ENCODE measurements at regions of chr14 and their contacts with region 1.

Region 1: DNA sequence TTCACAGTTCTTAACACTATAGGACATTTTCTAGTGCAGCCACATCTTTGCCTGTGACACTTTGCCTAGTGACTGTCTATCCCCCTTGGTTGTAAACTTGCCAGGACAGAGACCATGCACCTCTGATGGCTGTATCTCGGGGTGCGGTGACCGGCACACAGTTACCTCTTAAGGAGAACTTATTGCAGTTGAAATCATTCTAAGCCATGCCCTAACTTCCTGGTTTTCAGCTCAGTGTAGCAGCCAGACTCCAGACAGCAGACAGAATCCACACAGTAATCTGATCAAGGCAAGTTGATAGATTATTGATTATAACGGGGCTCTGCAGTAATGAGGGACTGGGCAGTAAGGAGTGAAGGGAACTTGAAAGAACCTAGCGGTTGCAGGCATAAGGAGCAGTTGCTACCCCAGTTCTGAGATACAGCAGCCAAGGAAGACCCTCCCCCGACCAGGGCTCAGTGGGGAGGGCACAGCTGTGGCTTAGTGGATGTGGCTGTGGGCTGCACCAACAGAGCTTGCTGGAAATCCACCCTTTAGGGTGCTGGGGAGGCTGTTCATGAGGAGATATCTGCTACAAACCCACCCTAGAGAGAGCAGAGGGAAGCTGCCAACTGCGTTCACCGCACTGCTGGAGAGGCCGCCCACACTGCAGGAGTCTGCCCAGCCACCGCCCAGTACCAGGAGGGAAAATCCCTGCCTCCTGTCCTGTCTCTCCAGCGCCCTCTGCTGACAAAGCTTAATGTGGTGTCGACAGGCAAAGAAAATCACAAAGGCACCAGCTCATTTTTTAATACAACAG is 58.2 kb upstream of the BEGAIN start:
- DNase-seq: peak; percentile 77 to 85 (median 80)
- H3K4me3 ChIP-seq: peak overlapping the region in 1 of 2 donors; percentile 27
- H3K4me3 Mint-ChIP-seq: peak overlapping the region in 7 of 8 donors; percentile 10 to 74 (median 64)
- H3K27ac ChIP-seq: no peak overlapping the region
- H3K27ac Mint-ChIP-seq: peak overlapping the region; percentile 9 to 83 (median 68)
- H3K4me1 ChIP-seq: peaks cover 43% of the 10 kb centered on the region
- H3K4me1 Mint-ChIP-seq: peaks cover 34 to 55% (median 48%) of the 10 kb centered on the region in 4 donors
- H3K27me3 ChIP-seq: no peaks in the 10 kb centered on the region
- H3K27me3 Mint-ChIP-seq: no peaks in the 10 kb centered on the region

Region 2: GRCh38 chr14:100375963-100376735 is 269.2 kb before region 1 on chr14:
- CTCF ChIA-PET with region 1: interaction called, 277 read pairs
- POLR2A ChIA-PET with region 1: interaction called, 8 read pairs
- intact Hi-C with region 1: no loop called
- DNase-seq: peak; percentile 88 to 93 (median 90)
- H3K4me3 ChIP-seq: peak within 1 kb of the TSS; percentile 83 to 92
- H3K4me3 Mint-ChIP-seq: peak within 1 kb of the TSS; percentile 92 to 97 (median 94)
- H3K27ac ChIP-seq: peak within 1 kb of the TSS; percentile 79
- H3K27ac Mint-ChIP-seq: peak within 1 kb of the TSS; percentile 90 to 96 (median 94)
- H3K4me1 ChIP-seq: peaks cover 28% of the 10 kb centered on the region
- H3K4me1 Mint-ChIP-seq: peaks cover 23 to 53% (median 32%) of the 10 kb centered on the region in 4 donors
- H3K27me3 ChIP-seq: no peaks in the 10 kb centered on the region
- H3K27me3 Mint-ChIP-seq: no peaks in the 10 kb centered on the region

Region 3: DNA sequence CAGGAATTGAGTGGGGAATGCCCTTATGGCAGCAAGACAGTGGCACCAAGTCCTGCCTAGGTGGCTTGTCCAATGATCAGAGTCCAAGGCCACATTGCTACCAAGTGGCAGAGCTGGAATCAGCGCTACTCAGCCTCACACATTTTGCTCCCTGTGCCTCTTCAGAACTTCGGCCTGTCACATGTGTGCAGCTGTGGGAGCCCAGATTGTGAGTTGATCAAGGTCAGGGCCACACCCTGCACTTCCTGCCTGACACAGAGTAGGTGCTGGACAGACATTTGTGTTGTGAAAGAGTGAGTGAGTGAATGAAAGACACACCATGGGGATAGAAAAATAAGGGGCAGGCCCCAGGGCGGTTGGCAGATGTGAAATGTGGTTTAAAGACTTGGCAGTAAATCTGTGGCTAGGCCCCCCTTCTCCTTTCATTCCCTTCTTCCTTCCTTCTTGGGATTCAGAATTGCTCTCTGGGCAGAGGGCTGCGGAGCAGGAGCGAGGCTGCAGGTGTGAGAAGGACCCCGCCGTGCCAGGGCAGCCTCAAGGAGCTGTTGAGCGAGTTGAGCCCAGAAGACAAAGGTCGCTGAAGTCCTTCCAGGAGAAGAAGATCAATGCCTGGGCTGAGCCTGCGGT is 238.8 kb before region 1 on chr14:
- CTCF ChIA-PET with region 1: interaction called, 14 read pairs
- POLR2A ChIA-PET with region 1: no interaction called
- intact Hi-C with region 1: no loop called
- DNase-seq: peak in 4 of 5 donors; percentile 17 to 29 (median 25)
- H3K4me3 ChIP-seq: no peak overlapping the region
- H3K4me3 Mint-ChIP-seq: peak overlapping the region in 7 of 8 donors; percentile 39 to 80 (median 70)
- H3K27ac ChIP-seq: peak overlapping the region; percentile 6
- H3K27ac Mint-ChIP-seq: peak overlapping the region; percentile 54 to 93 (median 89)
- H3K4me1 ChIP-seq: peaks cover 35% of the 10 kb centered on the region
- H3K4me1 Mint-ChIP-seq: peaks cover 26 to 49% (median 30%) of the 10 kb centered on the region in 4 donors
- H3K27me3 ChIP-seq: no peaks in the 10 kb centered on the region
- H3K27me3 Mint-ChIP-seq: no peaks in the 10 kb centered on the region

Region 4: DNA sequence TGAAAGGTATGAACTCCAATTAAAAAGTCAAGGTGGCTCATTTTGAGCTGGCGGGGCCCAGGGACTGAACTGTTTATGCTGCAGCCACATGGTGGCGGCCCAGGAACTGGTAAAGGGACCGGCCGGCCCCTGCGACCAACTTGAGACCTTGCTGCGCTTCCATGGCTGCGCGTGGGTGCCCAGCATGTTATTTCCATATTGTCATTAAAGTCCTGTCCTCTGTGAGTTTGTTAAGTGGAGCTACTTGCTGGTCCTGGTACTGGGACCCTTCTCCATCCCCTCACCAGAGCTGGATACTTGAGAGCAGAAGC is 120.5 kb before region 1 on chr14:
- CTCF ChIA-PET with region 1: interaction called, 16 read pairs
- POLR2A ChIA-PET with region 1: interaction called, 5 read pairs
- intact Hi-C with region 1: loop called (anchors 1 kb)
- DNase-seq: peak in 2 of 5 donors; percentile 23 to 25
- H3K4me3 ChIP-seq: no peak overlapping the region
- H3K4me3 Mint-ChIP-seq: no peak overlapping the region
- H3K27ac ChIP-seq: no peak overlapping the region
- H3K27ac Mint-ChIP-seq: no peak overlapping the region
- H3K4me1 ChIP-seq: no peaks in the 10 kb centered on the region
- H3K4me1 Mint-ChIP-seq: peaks cover 0 to 1% (median 0%) of the 10 kb centered on the region in 4 donors
- H3K27me3 ChIP-seq: no peaks in the 10 kb centered on the region
- H3K27me3 Mint-ChIP-seq: no peaks in the 10 kb centered on the region

Region 5: DNA sequence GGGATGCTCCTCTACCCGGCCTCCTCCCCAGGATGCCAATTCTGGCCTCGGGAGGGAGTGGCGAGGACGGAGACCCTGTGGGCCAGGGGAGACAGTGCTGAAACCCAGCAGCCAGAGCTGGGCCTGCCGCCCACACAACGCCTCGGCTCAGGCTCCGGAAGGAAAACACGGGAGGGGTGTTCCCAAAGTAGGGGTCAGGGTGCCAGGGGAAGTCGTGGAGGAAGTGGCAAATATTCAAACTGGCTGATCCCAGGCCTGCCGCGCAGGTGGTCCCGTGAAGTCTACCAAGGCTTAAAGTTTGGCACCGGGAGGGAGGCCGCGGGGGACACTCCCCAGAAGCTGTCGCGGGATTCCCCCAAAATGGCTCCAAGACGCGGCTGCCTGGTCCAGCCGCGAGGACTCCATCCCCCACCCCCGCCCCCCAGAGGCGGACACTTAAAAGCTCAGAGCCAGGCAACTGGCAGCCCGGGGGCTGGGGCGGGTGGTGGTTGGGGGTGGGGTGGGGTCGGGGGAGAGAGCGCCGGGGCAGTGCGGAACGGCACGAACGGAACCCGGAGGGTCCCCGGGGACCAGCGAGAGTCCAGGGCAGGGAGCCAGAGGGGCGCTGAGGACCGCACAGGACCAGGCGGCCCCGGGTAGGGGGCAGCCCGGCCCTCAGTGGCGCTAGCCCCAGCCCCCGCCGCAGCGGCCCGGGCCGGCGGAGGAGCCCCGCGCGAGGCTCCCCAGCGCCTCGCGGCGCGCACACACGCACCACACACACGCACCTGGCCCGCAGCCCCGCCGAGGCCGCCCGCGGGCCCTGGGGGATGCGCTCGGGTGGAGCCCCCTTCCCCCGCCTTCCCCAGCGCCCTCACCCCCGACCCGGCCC is 78.1 kb before region 1 on chr14:
- CTCF ChIA-PET with region 1: interaction called, 6 read pairs
- POLR2A ChIA-PET with region 1: no interaction called
- intact Hi-C with region 1: loop called (anchors 5 kb)
- DNase-seq: no peak
- H3K4me3 ChIP-seq: peak overlapping the region in 1 of 2 donors; percentile 43
- H3K4me3 Mint-ChIP-seq: peak overlapping the region; percentile 13 to 78 (median 67)
- H3K27ac ChIP-seq: no peak overlapping the region
- H3K27ac Mint-ChIP-seq: no peak overlapping the region
- H3K4me1 ChIP-seq: peaks cover 11% of the 10 kb centered on the region
- H3K4me1 Mint-ChIP-seq: peaks cover 0 to 8% (median 5%) of the 10 kb centered on the region in 4 donors
- H3K27me3 ChIP-seq: peaks cover 17% of the 10 kb centered on the region
- H3K27me3 Mint-ChIP-seq: peaks cover 14 to 20% of the 10 kb centered on the region in 2 donors

Region 6: DNA sequence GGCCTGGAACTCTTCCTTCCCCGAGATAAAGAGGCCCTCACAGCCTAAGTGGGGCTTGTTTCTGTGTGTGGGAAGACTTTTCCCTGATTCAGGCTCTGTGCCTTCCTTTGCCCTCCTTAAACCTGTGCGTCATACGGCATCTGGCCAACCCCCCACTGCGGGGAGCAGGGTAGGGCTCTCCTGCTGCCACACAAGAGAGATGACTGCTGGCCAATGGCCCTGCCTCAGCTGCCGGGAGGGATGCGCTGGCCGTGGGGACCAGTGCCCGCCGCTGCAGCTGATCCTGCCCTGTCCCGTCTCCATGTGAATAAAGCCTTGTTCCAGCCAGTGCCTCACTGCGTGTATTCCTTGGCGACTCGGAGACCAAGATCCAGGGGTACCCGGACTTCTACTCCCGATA is 15.7 kb before region 1 on chr14:
- CTCF ChIA-PET with region 1: interaction called, 11 read pairs
- POLR2A ChIA-PET with region 1: interaction called, 5 read pairs
- intact Hi-C with region 1: no loop called
- DNase-seq: no peak
- H3K4me3 ChIP-seq: no peak overlapping the region
- H3K4me3 Mint-ChIP-seq: peak overlapping the region in 1 of 8 donors; percentile 26
- H3K27ac ChIP-seq: no peak overlapping the region
- H3K27ac Mint-ChIP-seq: no peak overlapping the region
- H3K4me1 ChIP-seq: no peaks in the 10 kb centered on the region
- H3K4me1 Mint-ChIP-seq: no peaks in the 10 kb centered on the region
- H3K27me3 ChIP-seq: no peaks in the 10 kb centered on the region
- H3K27me3 Mint-ChIP-seq: peaks cover 3 to 7% of the 10 kb centered on the region in 2 donors

Measured in CD4-positive, alpha-beta memory T cell (primary cell).